Activated T-helper 1 cell treated with anti-CD3 and anti-CD28 coated beads, Interleukin-12 subunit alpha, Interleukin-12 subunit beta, Interleukin-2, Interleukin-4 antibody, amounts not matched to agents 30 ng/mL and 10 ng/mL and 1 ng/mL, durations not matched to agents 14 hours and 24 hours and 36 hours (primary cell): ENCODE measurements at regions of chr11 and their contacts with region 1.

Region 1: GRCh38 chr11:95715777-95716241 is 73.8 kb downstream of the FAM76B start:
- DNase-seq: no peak
- H3K4me3 Mint-ChIP-seq: peak overlapping the region; percentile 54
- H3K27ac Mint-ChIP-seq: peak overlapping the region; percentile 82
- H3K4me1 Mint-ChIP-seq: peaks cover 63% of the 10 kb centered on the region
- H3K27me3 Mint-ChIP-seq: no peaks in the 10 kb centered on the region

Region 2: GRCh38 chr11:95089620-95090542 is 625.9 kb before region 1 on chr11 and contains the start of gene ENDOD1:
- intact Hi-C with region 1: loop called (anchors 5 kb)
- DNase-seq: peak; percentile 85
- H3K4me3 Mint-ChIP-seq: peak within 1 kb of the TSS; percentile 89
- H3K27ac Mint-ChIP-seq: peak within 1 kb of the TSS; percentile 96
- H3K4me1 Mint-ChIP-seq: peaks cover 83% of the 10 kb centered on the region
- H3K27me3 Mint-ChIP-seq: no peaks in the 10 kb centered on the region
- total RNA-seq, gene ENDOD1: 33.8 and 34.3 TPM in 2 replicates

Region 3: DNA sequence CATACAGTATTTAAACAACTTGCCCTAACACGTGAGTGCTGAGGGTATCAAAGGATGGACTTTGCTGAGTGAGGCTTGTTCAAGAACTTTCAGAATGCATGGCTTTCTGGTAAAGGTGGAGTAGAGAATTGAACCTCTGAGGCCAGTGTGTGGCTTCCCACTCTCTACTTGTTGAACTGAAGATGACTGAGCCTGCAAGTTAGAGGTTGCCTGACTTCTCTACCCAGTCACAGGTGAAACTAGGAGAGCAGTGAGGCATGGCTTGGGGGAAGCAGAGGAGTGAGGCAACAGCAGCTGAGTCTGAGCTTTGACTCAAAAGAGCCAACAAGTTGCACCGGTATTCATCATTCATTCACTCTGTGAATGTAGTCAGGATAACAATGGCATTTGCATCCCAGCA is 228.4 kb before region 1 on chr11:
- intact Hi-C with region 1: no loop called
- DNase-seq: no peak
- H3K4me3 Mint-ChIP-seq: no peak overlapping the region
- H3K27ac Mint-ChIP-seq: no peak overlapping the region
- H3K4me1 Mint-ChIP-seq: peaks cover 11% of the 10 kb centered on the region
- H3K27me3 Mint-ChIP-seq: peaks cover 13% of the 10 kb centered on the region

Region 4: GRCh38 chr11:95599959-95600586 is 115.7 kb before region 1 on chr11:
- intact Hi-C with region 1: loop called (anchors 1 kb)
- DNase-seq: no peak
- H3K4me3 Mint-ChIP-seq: no peak overlapping the region
- H3K27ac Mint-ChIP-seq: peak overlapping the region; percentile 84
- H3K4me1 Mint-ChIP-seq: peaks cover 21% of the 10 kb centered on the region
- H3K27me3 Mint-ChIP-seq: no peaks in the 10 kb centered on the region

Region 5: GRCh38 chr11:95671768-95672167 is 44.0 kb before region 1 on chr11:
- intact Hi-C with region 1: loop called (anchors 1 kb)
- DNase-seq: no peak
- H3K4me3 Mint-ChIP-seq: no peak overlapping the region
- H3K27ac Mint-ChIP-seq: no peak overlapping the region
- H3K4me1 Mint-ChIP-seq: peaks cover 27% of the 10 kb centered on the region
- H3K27me3 Mint-ChIP-seq: no peaks in the 10 kb centered on the region

Region 6: DNA sequence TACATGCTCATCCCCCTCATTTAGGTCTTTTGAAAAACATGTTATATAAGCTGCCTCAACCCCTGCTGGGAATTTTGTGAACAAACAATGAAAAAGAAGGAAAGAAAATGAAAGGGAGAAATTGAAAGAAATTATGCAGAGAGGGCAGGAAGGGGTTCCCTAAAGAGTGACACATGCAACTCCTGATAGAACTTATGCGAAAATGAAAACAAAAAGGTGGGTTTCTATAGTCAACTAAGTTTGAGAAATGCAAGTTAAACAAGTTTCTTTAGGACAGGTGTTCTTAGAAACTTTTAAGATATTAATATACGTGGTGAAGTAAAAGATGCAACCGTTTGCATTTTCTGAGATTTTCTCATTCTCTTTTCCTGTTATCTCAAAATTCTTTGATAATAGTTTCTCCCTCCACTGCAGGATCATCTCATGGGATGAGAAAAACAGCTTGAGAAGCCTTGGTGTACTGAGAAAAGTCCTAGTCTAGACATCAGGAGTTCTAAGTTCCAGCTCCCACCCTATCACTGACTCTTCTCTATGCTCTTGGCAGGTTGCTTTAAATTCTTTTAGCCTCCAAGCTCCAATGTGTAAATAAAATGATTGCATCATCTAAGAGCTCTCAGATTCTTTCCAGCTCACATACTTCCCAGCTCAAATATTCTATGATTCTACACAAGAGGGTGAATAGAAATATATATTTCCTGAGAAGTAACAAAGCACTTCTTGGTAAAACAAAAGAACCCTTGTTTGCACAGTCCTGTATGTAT is 35.5 kb before region 1 on chr11:
- intact Hi-C with region 1: loop called (anchors 1 kb)
- DNase-seq: no peak
- H3K4me3 Mint-ChIP-seq: no peak overlapping the region
- H3K27ac Mint-ChIP-seq: peak overlapping the region; percentile 56
- H3K4me1 Mint-ChIP-seq: peaks cover 90% of the 10 kb centered on the region
- H3K27me3 Mint-ChIP-seq: no peaks in the 10 kb centered on the region

Region 7: GRCh38 chr11:95688580-95689189 is 27.1 kb before region 1 on chr11:
- intact Hi-C with region 1: loop called (anchors 1 kb)
- DNase-seq: peak; percentile 34
- H3K4me3 Mint-ChIP-seq: no peak overlapping the region
- H3K27ac Mint-ChIP-seq: no peak overlapping the region
- H3K4me1 Mint-ChIP-seq: peaks cover 26% of the 10 kb centered on the region
- H3K27me3 Mint-ChIP-seq: no peaks in the 10 kb centered on the region

Region 8: GRCh38 chr11:95727620-95728019 is 11.8 kb after region 1 on chr11:
- intact Hi-C with region 1: no loop called
- DNase-seq: no peak
- H3K4me3 Mint-ChIP-seq: no peak overlapping the region
- H3K27ac Mint-ChIP-seq: no peak overlapping the region
- H3K4me1 Mint-ChIP-seq: no peaks in the 10 kb centered on the region
- H3K27me3 Mint-ChIP-seq: peaks cover 10% of the 10 kb centered on the region